GM12878 (cell line): ENCODE measurements at regions of chr2 and their contacts with region 1.

Region 1: DNA sequence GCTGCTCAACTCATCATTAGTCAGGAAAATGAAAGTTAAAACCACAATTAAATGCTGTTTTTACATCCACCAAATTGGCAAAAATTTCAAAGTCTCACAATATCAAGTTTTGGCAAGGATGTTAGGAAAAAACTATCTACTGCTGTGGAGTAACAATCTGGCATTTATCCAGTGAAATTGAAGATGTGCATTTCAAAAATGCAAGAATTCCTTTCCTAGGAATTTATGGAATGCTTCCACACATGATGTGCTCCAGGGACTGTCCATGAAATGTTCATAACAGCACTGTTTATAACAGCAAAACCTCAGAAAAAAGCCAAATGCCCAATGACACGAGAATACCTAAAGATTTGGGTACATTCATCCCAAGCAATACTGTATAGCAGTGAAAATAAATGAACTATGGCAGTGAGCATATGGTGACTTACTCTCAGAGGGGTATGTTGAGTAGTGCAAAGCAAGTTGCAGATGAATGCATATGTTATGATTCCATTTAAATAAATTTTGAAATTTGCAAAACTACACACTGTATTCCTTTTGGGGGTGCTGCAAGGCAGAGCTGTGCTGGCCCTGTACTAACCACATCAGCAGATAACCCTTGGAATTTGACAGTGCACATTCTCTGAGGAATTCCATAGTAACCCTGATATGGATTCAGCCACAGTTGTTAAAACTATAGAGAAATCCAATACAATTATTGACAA is 41.3 kb upstream of the GYPC start:
- DNase-seq: no peak
- ATAC-seq: no peak
- H3K4me3 ChIP-seq: no peak overlapping the region
- H3K27ac ChIP-seq: no peak overlapping the region
- H3K4me1 ChIP-seq: no peaks in the 10 kb centered on the region; the same call in 1 of the 2 replicates
- H3K27me3 ChIP-seq: no peaks in the 10 kb centered on the region
- CTCF ChIP-seq: no peak
- EP300 ChIP-seq: no peak
- POLR2A ChIP-seq: no peak
- RAD21 ChIP-seq: no peak

Region 2: GRCh38 chr2:126627643-126628042 is 13.0 kb after region 1 on chr2:
- CTCF ChIA-PET with region 1: interaction called, 3 read pairs
- POLR2A ChIA-PET with region 1: no interaction called
- RAD21 ChIA-PET with region 1: interaction called, 23 read pairs
- SMC1A ChIA-PET with region 1: interaction called, 17 read pairs
- in situ Hi-C with region 1: no loop called
- intact Hi-C with region 1: no loop called
- DNase-seq: no peak
- ATAC-seq: no peak
- H3K4me3 ChIP-seq: no peak overlapping the region
- H3K27ac ChIP-seq: no peak overlapping the region
- H3K4me1 ChIP-seq: no peaks in the 10 kb centered on the region
- H3K27me3 ChIP-seq: no peaks in the 10 kb centered on the region
- CTCF ChIP-seq: no peak
- EP300 ChIP-seq: no peak
- POLR2A ChIP-seq: no peak
- RAD21 ChIP-seq: no peak

Region 3: DNA sequence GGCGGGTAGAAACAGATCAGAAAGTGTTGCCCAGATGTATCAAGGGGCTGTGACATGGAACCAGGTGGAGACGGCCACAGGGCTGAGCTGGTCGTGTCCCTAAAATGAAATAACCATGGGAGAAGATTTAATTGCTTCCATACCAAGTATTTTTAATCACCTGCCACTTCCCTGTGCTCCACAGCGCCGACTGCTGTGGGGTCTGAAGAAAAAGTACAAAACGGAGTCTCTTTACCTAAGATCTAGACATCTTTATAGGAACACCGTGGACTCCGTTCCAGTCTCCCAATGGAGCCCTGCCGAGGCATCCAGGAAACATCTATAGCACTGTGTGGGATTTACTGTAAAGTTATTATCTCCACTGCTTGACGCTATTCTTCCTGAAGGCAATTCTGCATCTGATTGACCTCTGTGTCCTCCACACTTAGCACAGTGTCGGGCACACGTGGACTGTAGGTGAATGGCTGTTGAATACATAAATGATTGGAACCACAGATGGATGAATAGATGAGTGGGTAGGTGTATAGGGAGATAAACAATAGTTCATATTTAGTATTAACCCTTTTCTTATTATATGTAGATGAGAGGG is 19.7 kb after region 1 on chr2:
- CTCF ChIA-PET with region 1: interaction called, 40 read pairs
- POLR2A ChIA-PET with region 1: no interaction called
- RAD21 ChIA-PET with region 1: interaction called, 23 read pairs
- SMC1A ChIA-PET with region 1: interaction called, 24 read pairs
- in situ Hi-C with region 1: no loop called
- intact Hi-C with region 1: no loop called
- DNase-seq: no peak
- ATAC-seq: peak; percentile 64
- H3K4me3 ChIP-seq: no peak overlapping the region
- H3K27ac ChIP-seq: no peak overlapping the region
- H3K4me1 ChIP-seq: no peaks in the 10 kb centered on the region
- H3K27me3 ChIP-seq: no peaks in the 10 kb centered on the region
- CTCF ChIP-seq: peak; percentile 61 to 69 (median 67); a peak in 5 of 6 replicates
- EP300 ChIP-seq: no peak
- POLR2A ChIP-seq: no peak
- RAD21 ChIP-seq: peak; percentile 65

Region 4: DNA sequence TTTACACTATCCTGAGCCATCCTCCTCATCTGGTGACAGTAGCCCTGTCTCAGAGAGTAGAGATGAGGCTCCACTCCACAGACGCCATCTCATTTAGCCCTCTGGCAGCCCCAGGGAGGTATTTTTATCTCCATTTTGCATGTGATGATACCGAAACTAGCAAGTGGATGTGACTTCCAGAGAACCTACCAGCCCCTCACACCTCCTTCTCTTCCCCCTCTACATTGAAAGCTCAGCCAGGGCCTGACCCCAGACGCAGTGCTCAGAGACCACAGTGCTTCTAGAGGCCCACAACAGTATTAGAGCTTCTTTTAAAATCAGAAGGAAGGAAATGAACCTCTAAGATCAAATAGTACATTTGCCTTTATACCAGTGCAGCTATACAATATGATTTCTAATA is 49.6 kb after region 1 on chr2:
- CTCF ChIA-PET with region 1: interaction called, 14 read pairs
- POLR2A ChIA-PET with region 1: interaction called, 4 read pairs
- RAD21 ChIA-PET with region 1: interaction called, 6 read pairs
- SMC1A ChIA-PET with region 1: interaction called, 9 read pairs
- in situ Hi-C with region 1: no loop called
- intact Hi-C with region 1: no loop called
- DNase-seq: peak; percentile 67
- ATAC-seq: peak; percentile 84
- H3K4me3 ChIP-seq: peak overlapping the region; percentile 22; the same call in 1 of the 2 replicates
- H3K27ac ChIP-seq: peak overlapping the region; percentile 89
- H3K4me1 ChIP-seq: peaks cover 55% of the 10 kb centered on the region
- H3K27me3 ChIP-seq: no peaks in the 10 kb centered on the region
- CTCF ChIP-seq: no peak
- EP300 ChIP-seq: peak in 1 of 2 experiments; percentile 53; a peak in 1 of 4 replicates
- POLR2A ChIP-seq: no peak
- RAD21 ChIP-seq: no peak

Region 5: GRCh38 chr2:127045792-127046501 is 431.3 kb after region 1 on chr2:
- CTCF ChIA-PET with region 1: no interaction called
- POLR2A ChIA-PET with region 1: no interaction called
- RAD21 ChIA-PET with region 1: no interaction called
- SMC1A ChIA-PET with region 1: no interaction called
- in situ Hi-C with region 1: no loop called
- intact Hi-C with region 1: no loop called
- DNase-seq: no peak
- ATAC-seq: no peak
- H3K4me3 ChIP-seq: no peak overlapping the region
- H3K27ac ChIP-seq: no peak overlapping the region
- H3K4me1 ChIP-seq: no peaks in the 10 kb centered on the region
- H3K27me3 ChIP-seq: no peaks in the 10 kb centered on the region
- CTCF ChIP-seq: no peak
- EP300 ChIP-seq: no peak
- POLR2A ChIP-seq: no peak
- RAD21 ChIP-seq: no peak